ENCODE measurements at regions of chr5 and their contacts with region 1.

Region 1: GRCh38 chr5:123907349-123907748 is 395.4 kb downstream of the CSNK1G3 start:
- DNase-seq: no peak
- H3K4me3 ChIP-seq: no peak overlapping the region
- CTCF ChIP-seq: no peak

Region 2: GRCh38 chr5:123874600-123875201 is 32.6 kb before region 1 on chr5:
- in situ Hi-C with region 1: loop called (anchors 5 kb)
- DNase-seq: peak; percentile 73
- H3K4me3 ChIP-seq: no peak overlapping the region
- CTCF ChIP-seq: no peak